Esophagus squamous epithelium (tissue), 5 donors: ENCODE measurements at regions of chr1 and their contacts with region 1.

Region 1: DNA sequence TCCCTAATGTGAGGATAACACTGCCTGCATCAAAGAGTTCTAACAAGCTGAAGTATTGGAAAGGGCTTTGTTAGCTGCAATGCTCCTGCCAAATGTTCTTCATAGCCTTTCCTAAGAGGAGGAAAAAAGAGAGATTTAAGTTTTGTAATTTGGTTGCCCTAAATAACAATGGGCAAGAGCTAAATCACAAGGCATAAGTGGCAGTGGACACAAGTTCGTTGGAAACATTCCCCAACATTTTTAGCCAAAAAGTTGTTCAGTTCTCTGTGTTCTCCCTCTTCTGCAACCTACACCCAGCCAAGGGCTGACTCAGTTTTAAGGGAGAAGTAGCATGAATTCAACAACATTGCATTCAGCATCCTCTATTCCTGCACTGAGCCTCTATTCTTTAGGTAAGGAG is 2.6 kb upstream of the UQCRHL start:
- DNase-seq: no peak
- H3K4me3 ChIP-seq: no peak overlapping the region
- H3K27ac ChIP-seq: peak overlapping the region in 1 of 4 donors; percentile 30
- H3K4me1 ChIP-seq: peaks cover 0 to 8% (median 0%) of the 10 kb centered on the region in 3 donors
- H3K27me3 ChIP-seq: no peaks in the 10 kb centered on the region
- CTCF ChIP-seq: no peak
- POLR2A ChIP-seq: no peak

Region 2: GRCh38 chr1:15311880-15312279 is 498.2 kb before region 1 on chr1:
- intact Hi-C with region 1: no loop called
- DNase-seq: no peak
- H3K4me3 ChIP-seq: no peak overlapping the region
- H3K27ac ChIP-seq: no peak overlapping the region
- H3K4me1 ChIP-seq: no peaks in the 10 kb centered on the region
- H3K27me3 ChIP-seq: peaks cover 0 to 2% (median 0%) of the 10 kb centered on the region in 4 donors
- CTCF ChIP-seq: no peak
- POLR2A ChIP-seq: no peak

Region 3: DNA sequence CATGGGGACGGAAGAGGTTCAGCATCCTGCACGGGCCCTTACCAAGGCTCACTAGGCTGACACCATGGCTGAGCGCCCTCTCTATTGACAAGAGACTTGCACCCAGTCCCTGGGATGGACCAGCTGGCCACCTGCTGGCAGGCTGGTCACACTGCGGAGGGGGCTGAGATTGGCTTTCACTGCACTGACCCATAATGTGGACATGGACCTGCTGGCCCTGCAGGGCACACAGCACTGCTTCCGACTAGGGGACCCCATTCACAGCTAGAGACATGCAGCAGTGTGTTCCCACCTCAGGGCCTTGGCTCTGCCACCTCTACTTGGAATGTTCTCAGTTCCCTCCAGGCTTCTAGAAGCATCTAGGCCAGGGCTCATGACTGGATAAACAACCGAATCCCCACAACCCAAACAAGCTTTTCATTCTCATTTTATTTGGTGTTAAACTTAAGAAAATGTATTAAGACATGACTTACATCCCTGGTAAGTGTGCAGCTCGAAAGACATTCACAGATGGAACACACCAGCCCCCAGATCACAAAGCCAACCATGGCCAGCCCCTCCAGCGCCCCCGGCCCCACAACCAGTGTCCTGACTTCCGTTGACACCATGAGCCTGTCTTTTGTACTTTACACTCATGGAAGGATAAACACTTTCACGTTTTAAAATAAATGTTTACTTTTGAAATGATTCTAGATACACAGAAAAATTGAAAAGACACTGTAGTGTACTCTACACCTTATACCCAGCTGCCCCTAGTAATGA is 184.7 kb after region 1 on chr1:
- intact Hi-C with region 1: loop called (anchors 10 kb)
- DNase-seq: no peak
- H3K4me3 ChIP-seq: no peak overlapping the region
- H3K27ac ChIP-seq: no peak overlapping the region
- H3K4me1 ChIP-seq: no peaks in the 10 kb centered on the region
- H3K27me3 ChIP-seq: no peaks in the 10 kb centered on the region
- CTCF ChIP-seq: peak; percentile 67 to 84 (median 78)
- POLR2A ChIP-seq: no peak